Panc1 (cell line): ENCODE measurements at regions of chr9 and their contacts with region 1.

Region 1: GRCh38 chr9:2132484-2133082 is 117.4 kb downstream of the SMARCA2 start:
- DNase-seq: no peak
- ATAC-seq: no peak
- H3K4me3 ChIP-seq: no peak overlapping the region
- H3K27ac ChIP-seq: no peak overlapping the region
- H3K4me1 ChIP-seq: no peaks in the 10 kb centered on the region
- H3K27me3 ChIP-seq: no peaks in the 10 kb centered on the region
- CTCF ChIP-seq: peak; percentile 42; the same call in 1 of the 2 replicates

Region 2: DNA sequence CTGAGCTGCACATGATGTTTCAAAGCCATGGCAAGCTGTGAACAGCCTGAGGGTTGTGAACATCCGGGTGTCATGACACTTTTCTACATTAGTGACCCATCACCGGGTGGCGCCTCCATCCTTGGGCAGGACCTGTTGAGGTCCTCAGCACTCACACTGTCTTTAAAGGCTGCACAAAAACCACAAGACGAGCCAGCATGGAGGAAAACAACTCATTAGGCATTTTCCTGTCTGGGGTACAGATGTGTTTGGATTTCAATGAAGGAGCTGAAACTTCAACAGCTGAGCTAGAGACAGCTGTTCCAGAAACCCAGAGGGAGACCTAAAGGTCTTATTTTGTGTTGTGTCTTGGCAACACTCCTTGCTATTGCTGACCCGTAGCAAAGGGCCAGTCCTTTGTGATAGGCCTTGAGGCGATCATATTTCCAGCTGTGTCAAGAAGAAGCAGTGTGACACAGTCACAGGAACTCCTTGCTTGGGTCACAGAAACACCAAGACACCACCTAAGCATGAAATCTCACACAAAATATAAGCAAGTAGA is 337.2 kb after region 1 on chr9:
- CTCF ChIA-PET with region 1: no interaction called
- POLR2A ChIA-PET with region 1: no interaction called
- in situ Hi-C with region 1: no loop called
- intact Hi-C with region 1: loop called (anchors 10 kb)
- DNase-seq: no peak
- ATAC-seq: no peak
- H3K4me3 ChIP-seq: no peak overlapping the region
- H3K27ac ChIP-seq: no peak overlapping the region
- H3K4me1 ChIP-seq: no peaks in the 10 kb centered on the region
- H3K27me3 ChIP-seq: no peaks in the 10 kb centered on the region
- CTCF ChIP-seq: no peak